ENCODE measurements at regions of chr17 and their contacts with region 1.

Region 1: GRCh38 chr17:15341385-15341849 is at the start of gene TEKT3:
- DNase-seq: peak; percentile 84 to 93 (median 92)
- ATAC-seq: peak; percentile 99 to 100 (median 100)
- H3K4me3 ChIP-seq: peak within 1 kb of the TSS; percentile 30 to 76 (median 54)
- H3K27ac ChIP-seq: peak within 1 kb of the TSS in 2 of 12 donors; percentile 20 to 26
- H3K4me1 ChIP-seq: peaks cover 0 to 7% (median 5%) of the 10 kb centered on the region in 12 donors
- H3K27me3 ChIP-seq: peaks cover 0 to 29% (median 2%) of the 10 kb centered on the region in 9 donors
- CTCF ChIP-seq: no peak
- POLR2A ChIP-seq: peak in 1 of 2 donors; percentile 50
- total RNA-seq, gene TEKT3: 0.32 to 1.0 (median 0.71) TPM in 6 of 9 donors, not detected in the others

Region 2: GRCh38 chr17:15273141-15273793 is 68.2 kb before region 1 on chr17:
- intact Hi-C with region 1: loop called in 3 of 10 experiments (anchors 10 kb)
- DNase-seq: no peak
- ATAC-seq: peak in 3 of 4 donors; percentile 18 to 46 (median 28)
- H3K4me3 ChIP-seq: no peak overlapping the region
- H3K27ac ChIP-seq: peak overlapping the region in 4 of 12 donors; percentile 11 to 55 (median 21)
- H3K4me1 ChIP-seq: peaks cover 3 to 40% (median 15%) of the 10 kb centered on the region in 12 donors
- H3K27me3 ChIP-seq: no peaks in the 10 kb centered on the region
- CTCF ChIP-seq: no peak
- POLR2A ChIP-seq: no peak

Region 3: GRCh38 chr17:15398736-15399331 is 57.4 kb after region 1 on chr17:
- intact Hi-C with region 1: loop called in 1 of 10 experiments (anchors 10 kb)
- DNase-seq: peak in 2 of 5 donors; percentile 36 to 73
- ATAC-seq: peak in 3 of 4 donors; percentile 63 to 73 (median 72)
- H3K4me3 ChIP-seq: no peak overlapping the region
- H3K27ac ChIP-seq: peak overlapping the region in 8 of 12 donors; percentile 3 to 62 (median 30)
- H3K4me1 ChIP-seq: peaks cover 6 to 31% (median 21%) of the 10 kb centered on the region in 12 donors
- H3K27me3 ChIP-seq: no peaks in the 10 kb centered on the region
- CTCF ChIP-seq: no peak
- POLR2A ChIP-seq: no peak

Region 4: DNA sequence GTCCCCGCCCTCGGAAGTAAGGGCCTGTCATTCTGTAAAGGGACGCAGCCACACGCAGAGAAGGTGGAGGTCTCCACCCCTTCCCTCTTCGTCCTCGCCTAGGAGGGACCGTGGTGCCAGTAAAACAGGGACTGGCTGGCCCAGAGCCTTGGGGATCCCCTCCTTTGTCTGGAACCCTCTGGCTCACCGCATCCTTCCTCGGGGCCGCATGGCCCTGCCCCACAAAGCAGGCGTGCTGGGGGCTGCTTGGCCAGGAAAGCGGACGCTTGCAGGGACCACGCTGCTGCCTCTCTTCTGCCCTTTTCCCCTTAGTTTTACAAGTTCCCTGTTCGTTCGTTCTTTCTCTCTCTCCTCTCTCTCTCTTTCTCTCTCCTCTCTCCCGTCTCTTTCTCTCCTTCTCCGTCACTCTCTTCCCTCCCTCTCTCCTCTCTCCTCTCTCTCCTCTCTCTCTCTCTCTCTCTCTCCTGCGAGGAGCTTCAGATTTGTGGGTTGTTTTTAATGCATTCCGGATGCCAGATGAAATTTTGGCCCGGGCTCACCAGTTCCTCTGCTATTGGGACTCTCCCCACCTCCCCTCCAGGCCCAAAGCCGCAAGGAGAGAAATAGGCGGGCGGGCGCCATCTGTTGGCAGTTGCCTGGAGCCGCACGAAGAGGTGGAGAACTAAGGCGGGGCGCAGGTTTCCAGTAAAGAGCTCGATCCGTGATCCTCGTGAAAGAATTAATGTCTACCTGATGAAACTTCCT is 161.1 kb after region 1 on chr17:
- intact Hi-C with region 1: loop called in 1 of 10 experiments (anchors 5 kb)
- DNase-seq: peak; percentile 90 to 95 (median 91)
- ATAC-seq: peak; percentile 78 to 95 (median 91)
- H3K4me3 ChIP-seq: peak overlapping the region in 10 of 12 donors; percentile 10 to 56 (median 42)
- H3K27ac ChIP-seq: peak overlapping the region; percentile 61 to 85 (median 78)
- H3K4me1 ChIP-seq: peaks cover 0 to 17% (median 11%) of the 10 kb centered on the region in 12 donors
- H3K27me3 ChIP-seq: no peaks in the 10 kb centered on the region
- CTCF ChIP-seq: peak; percentile 80 to 96 (median 91)
- POLR2A ChIP-seq: no peak